Left lung (tissue), 14 donors: ENCODE measurements at regions of chr16 and their contacts with region 1.

Region 1: GRCh38 chr16:85114909-85115567 is 2.8 kb upstream of the CIBAR2 start:
- DNase-seq: peak; percentile 77 to 96 (median 88)
- ATAC-seq: peak; percentile 97
- H3K4me3 ChIP-seq: no peak overlapping the region
- H3K27ac ChIP-seq: peak overlapping the region in 1 of 2 donors; percentile 55
- H3K4me1 ChIP-seq: peaks cover 0 to 9% of the 10 kb centered on the region in 2 donors
- H3K27me3 ChIP-seq: no peaks in the 10 kb centered on the region
- CTCF ChIP-seq: peak; percentile 95 to 98

Region 2: DNA sequence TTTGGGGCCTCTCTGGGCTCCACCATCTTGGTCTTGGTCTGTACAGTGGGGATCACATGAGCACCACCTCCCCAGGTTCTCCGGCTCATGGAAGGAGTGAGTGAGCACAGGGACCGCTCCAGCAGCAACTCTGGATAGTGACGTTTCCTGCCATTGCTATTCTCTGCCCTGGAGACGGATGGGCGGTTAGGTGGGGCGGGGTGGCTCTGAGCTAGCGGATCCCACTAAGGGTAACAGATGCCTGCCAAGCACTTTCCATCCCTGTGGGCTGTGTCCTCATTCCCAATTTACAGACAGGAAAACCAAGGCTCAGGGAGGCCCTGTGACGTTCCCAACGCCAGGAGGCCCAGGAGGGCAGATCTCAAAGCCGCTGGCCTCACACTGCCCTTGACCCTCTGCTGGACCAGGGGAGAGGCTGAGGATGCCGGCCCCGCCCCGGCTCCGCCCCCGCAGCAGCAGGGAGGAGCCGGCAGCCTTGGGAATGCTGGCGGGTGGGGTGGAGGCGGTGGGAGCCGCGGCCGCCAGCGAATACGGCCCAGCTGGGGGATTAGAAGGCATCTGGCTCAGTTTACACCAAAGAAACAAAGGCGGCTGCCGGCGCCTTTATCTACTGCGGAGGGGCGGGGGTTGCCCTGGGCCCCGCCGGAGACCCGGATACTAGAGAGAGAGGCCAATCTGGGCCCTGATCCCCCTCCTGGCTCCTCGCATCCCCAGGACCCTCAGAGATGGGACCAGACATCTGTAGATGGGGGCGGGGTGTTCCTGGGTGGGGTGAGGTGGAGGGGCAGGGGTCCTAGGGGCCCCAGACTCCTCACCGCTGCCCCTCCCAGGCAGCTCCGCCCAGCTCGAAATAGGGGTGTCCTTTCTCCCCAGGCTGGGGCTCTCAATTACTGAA is 119.5 kb after region 1 on chr16:
- intact Hi-C with region 1: loop called in 1 of 2 experiments (anchors 10 kb)
- DNase-seq: peak in 3 of 4 donors; percentile 53 to 95 (median 90)
- ATAC-seq: peak; percentile 76
- H3K4me3 ChIP-seq: peak overlapping the region in 1 of 2 donors; percentile 13
- H3K27ac ChIP-seq: peak overlapping the region in 1 of 2 donors; percentile 67
- H3K4me1 ChIP-seq: peaks cover 9 to 31% of the 10 kb centered on the region in 2 donors
- H3K27me3 ChIP-seq: peaks cover 0 to 49% of the 10 kb centered on the region in 2 donors
- CTCF ChIP-seq: no peak